ENCODE measurements at regions of chr10 and their contacts with region 1.

Region 1: GRCh38 chr10:100009793-100010676 is at the start of gene DNMBP:
- DNase-seq: peak; percentile 87
- ATAC-seq: peak; percentile 99
- H3K4me3 Mint-ChIP-seq: peak within 1 kb of the TSS; percentile 81
- H3K27ac Mint-ChIP-seq: peak within 1 kb of the TSS; percentile 53
- H3K4me1 Mint-ChIP-seq: peaks cover 41% of the 10 kb centered on the region
- H3K27me3 Mint-ChIP-seq: peaks cover 28% of the 10 kb centered on the region
- total RNA-seq, gene DNMBP: 3.4 to 5.1 TPM

Region 2: DNA sequence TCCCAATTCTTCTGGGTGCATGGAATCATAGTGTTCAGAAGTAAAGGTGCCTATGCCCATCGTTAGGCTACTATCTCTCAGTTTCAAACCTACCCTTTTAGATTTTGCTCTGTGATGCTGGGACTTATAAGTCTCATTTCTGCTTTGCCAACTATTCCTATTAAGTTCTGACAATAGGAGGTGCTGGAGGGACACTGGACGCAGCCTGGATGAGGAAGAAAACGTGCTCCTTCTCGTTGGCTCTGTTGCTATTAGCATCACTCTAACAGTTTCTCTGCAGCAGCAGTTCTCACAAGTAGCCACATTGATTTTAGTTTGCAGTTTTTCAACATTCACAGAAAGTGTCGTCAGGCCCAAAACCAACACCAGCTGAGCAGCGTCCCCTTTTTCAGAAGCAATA is 155.2 kb before region 1 on chr10:
- CTCF ChIA-PET with region 1: interaction called, 72 read pairs
- DNase-seq: no peak
- ATAC-seq: no peak
- H3K4me3 Mint-ChIP-seq: no peak overlapping the region
- H3K27ac Mint-ChIP-seq: no peak overlapping the region
- H3K4me1 Mint-ChIP-seq: no peaks in the 10 kb centered on the region
- H3K27me3 Mint-ChIP-seq: peaks cover 16% of the 10 kb centered on the region

Region 3: GRCh38 chr10:99993701-99994689 is 16.0 kb before region 1 on chr10:
- CTCF ChIA-PET with region 1: interaction called, 30 read pairs
- DNase-seq: peak; percentile 83
- ATAC-seq: peak; percentile 93
- H3K4me3 Mint-ChIP-seq: peak overlapping the region; percentile 21
- H3K27ac Mint-ChIP-seq: peak overlapping the region; percentile 67
- H3K4me1 Mint-ChIP-seq: peaks cover 17% of the 10 kb centered on the region
- H3K27me3 Mint-ChIP-seq: no peaks in the 10 kb centered on the region

Region 4: GRCh38 chr10:100020142-100020885 is 10.3 kb after region 1 on chr10:
- CTCF ChIA-PET with region 1: interaction called, 28 read pairs
- DNase-seq: peak; percentile 62
- ATAC-seq: peak; percentile 71
- H3K4me3 Mint-ChIP-seq: no peak overlapping the region
- H3K27ac Mint-ChIP-seq: no peak overlapping the region
- H3K4me1 Mint-ChIP-seq: peaks cover 15% of the 10 kb centered on the region
- H3K27me3 Mint-ChIP-seq: peaks cover 9% of the 10 kb centered on the region

Region 5: GRCh38 chr10:100081075-100082001 is 71.3 kb after region 1 on chr10 and contains the start of gene CPN1:
- CTCF ChIA-PET with region 1: no interaction called
- DNase-seq: no peak
- ATAC-seq: no peak
- H3K4me3 Mint-ChIP-seq: no peak within 1 kb of the TSS
- H3K27ac Mint-ChIP-seq: no peak within 1 kb of the TSS
- H3K4me1 Mint-ChIP-seq: no peaks in the 10 kb centered on the region
- H3K27me3 Mint-ChIP-seq: peaks cover 52% of the 10 kb centered on the region
- total RNA-seq, gene CPN1: not detected